ENCODE measurements at regions of chr20 and their contacts with region 1.

Region 1: GRCh38 chr20:60210779-60211617 is 252.8 kb downstream of the CDH26 start:
- DNase-seq: peak; percentile 62 to 75 (median 73)
- ATAC-seq: peak; percentile 99
- H3K4me3 ChIP-seq: no peak overlapping the region
- H3K27ac ChIP-seq: no peak overlapping the region
- H3K4me1 ChIP-seq: no peaks in the 10 kb centered on the region
- H3K27me3 ChIP-seq: peaks cover 0 to 12% of the 10 kb centered on the region in 2 experiments; a peak in 1 of 5 replicates
- CTCF ChIP-seq: peak; percentile 81 to 90 (median 85)
- EP300 ChIP-seq: no peak
- POLR2A ChIP-seq: no peak
- RAD21 ChIP-seq: peak; percentile 63 to 81

Region 2: GRCh38 chr20:60262967-60263603 is 52.1 kb after region 1 on chr20:
- CTCF ChIA-PET with region 1: no interaction called
- POLR2A ChIA-PET with region 1: no interaction called
- in situ Hi-C with region 1: no loop called
- intact Hi-C with region 1: loop called (anchors 2 kb)
- DNase-seq: peak; percentile 57 to 75 (median 68)
- ATAC-seq: peak; percentile 80
- H3K4me3 ChIP-seq: no peak overlapping the region
- H3K27ac ChIP-seq: no peak overlapping the region
- H3K4me1 ChIP-seq: no peaks in the 10 kb centered on the region
- H3K27me3 ChIP-seq: no peaks in the 10 kb centered on the region; a peak in 1 of 5 replicates
- CTCF ChIP-seq: peak; percentile 68 to 87 (median 75)
- EP300 ChIP-seq: no peak
- POLR2A ChIP-seq: no peak
- RAD21 ChIP-seq: peak; percentile 21 to 52; a peak in 2 of 4 replicates

Region 3: GRCh38 chr20:61120595-61121515 is 909.9 kb after region 1 on chr20:
- CTCF ChIA-PET with region 1: no interaction called
- POLR2A ChIA-PET with region 1: no interaction called
- in situ Hi-C with region 1: no loop called
- intact Hi-C with region 1: loop called (anchors 5 kb)
- DNase-seq: peak in 1 of 4 experiments; percentile 74
- ATAC-seq: peak; percentile 98
- H3K4me3 ChIP-seq: no peak overlapping the region
- H3K27ac ChIP-seq: no peak overlapping the region
- H3K4me1 ChIP-seq: no peaks in the 10 kb centered on the region
- H3K27me3 ChIP-seq: peaks cover 2 to 36% of the 10 kb centered on the region in 2 experiments; a peak in 3 of 5 replicates
- CTCF ChIP-seq: peak; percentile 58 to 66 (median 64)
- EP300 ChIP-seq: no peak
- POLR2A ChIP-seq: no peak
- RAD21 ChIP-seq: peak in 1 of 2 experiments; percentile 55; a peak in 3 of 4 replicates

Region 4: GRCh38 chr20:61220160-61220559 is 1009.2 kb after region 1 on chr20:
- CTCF ChIA-PET with region 1: no interaction called
- POLR2A ChIA-PET with region 1: no interaction called
- in situ Hi-C with region 1: no loop called
- intact Hi-C with region 1: loop called (anchors 10 kb)
- DNase-seq: no peak
- ATAC-seq: no peak
- H3K4me3 ChIP-seq: no peak overlapping the region
- H3K27ac ChIP-seq: no peak overlapping the region
- H3K4me1 ChIP-seq: no peaks in the 10 kb centered on the region
- H3K27me3 ChIP-seq: peaks cover 0 to 13% of the 10 kb centered on the region in 2 experiments; a peak in 3 of 5 replicates
- CTCF ChIP-seq: no peak
- EP300 ChIP-seq: no peak
- POLR2A ChIP-seq: no peak
- RAD21 ChIP-seq: no peak

Region 5: DNA sequence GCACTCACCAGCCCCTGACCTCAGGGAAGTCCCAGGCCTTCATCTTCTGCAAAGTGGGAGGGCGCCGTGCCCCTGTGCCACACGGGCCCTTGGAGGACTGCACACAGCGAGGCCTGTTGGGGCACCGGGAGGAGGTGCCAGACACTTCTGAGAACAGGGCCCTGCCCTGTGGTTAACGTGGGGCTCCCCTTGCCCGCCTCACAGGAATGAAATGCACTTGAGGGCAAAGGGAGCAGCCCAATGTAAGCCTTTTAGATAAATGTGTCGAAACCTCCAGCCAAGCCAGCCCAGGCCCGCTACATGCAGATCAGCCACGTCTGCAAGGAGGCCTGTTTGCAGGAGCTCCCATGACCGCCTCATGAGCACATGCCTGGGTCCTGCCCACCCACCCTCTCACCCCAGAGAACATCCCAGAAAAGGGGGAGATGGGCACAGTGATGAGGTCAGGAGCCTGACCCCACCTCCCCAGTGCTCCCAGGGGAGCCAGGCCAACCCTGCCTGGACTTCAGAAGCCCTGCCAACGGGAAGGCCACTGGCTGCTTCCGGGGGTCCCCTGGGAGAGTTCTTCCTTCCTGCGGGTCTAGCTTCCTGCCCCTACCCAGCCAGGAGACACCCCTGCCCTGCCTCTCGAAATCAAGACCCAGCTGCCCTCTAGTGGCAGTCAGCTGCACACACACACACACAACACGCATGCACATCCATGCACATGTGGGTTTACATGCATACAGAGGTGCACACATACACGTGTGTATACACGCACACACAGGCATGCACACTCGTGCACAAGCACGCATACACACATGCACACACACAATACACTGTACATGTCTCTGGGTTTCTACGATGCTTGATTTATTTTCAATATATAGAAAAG is 1676.0 kb after region 1 on chr20:
- CTCF ChIA-PET with region 1: no interaction called
- POLR2A ChIA-PET with region 1: no interaction called
- in situ Hi-C with region 1: loop called (anchors 25 kb)
- intact Hi-C with region 1: no loop called
- DNase-seq: peak; percentile 56 to 76 (median 66)
- ATAC-seq: peak; percentile 89
- H3K4me3 ChIP-seq: no peak overlapping the region
- H3K27ac ChIP-seq: no peak overlapping the region
- H3K4me1 ChIP-seq: no peaks in the 10 kb centered on the region; a peak in 2 of 5 replicates
- H3K27me3 ChIP-seq: peaks cover 22 to 44% of the 10 kb centered on the region in 2 experiments
- CTCF ChIP-seq: peak; percentile 73 to 88 (median 77)
- EP300 ChIP-seq: no peak
- POLR2A ChIP-seq: no peak
- RAD21 ChIP-seq: peak; percentile 36 to 70

Measured in K562 (cell line).